Left ventricle myocardium inferior (tissue), 1 donor: ENCODE measurements at regions of chr1 and their contacts with region 1.

Region 1: DNA sequence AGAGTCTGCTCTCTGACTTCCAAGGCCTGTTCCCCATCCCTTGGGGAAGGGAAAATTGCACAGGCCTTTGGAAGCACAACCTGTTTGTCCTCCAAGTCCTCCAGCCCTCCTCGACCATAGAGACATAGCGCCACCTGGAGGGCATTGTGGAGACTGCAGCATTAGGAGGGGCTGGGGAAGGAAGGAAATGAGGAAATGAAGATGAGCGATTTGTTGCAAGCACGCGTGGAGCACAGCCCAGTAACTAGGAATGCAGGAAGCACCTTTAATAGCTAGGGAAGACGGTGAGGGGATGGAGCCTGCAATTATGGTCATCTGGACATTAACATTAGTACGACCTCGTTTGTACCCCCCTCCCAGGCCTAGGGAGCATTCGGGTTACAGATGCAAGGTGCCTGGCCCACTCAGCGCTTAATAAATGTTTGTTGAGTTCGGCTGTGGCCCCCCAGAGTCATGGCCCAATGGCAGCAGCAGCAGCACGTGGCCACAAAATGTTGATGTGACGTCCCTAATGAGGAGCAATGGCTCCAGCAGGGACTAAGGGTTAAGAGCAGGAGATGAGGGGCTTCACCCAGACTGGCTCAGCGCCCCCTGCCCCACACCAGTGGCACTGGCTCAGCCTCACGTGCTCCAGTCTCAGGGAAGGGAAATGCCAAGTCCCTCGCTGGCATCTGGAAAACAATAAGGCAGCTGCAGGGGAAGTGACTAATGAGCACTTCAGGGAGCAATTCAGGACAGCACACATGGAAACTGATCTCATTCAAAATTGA is 8.0 kb upstream of the CAMK2N1 start:
- DNase-seq: peak; percentile 86
- H3K4me3 ChIP-seq: no peak overlapping the region
- H3K27ac ChIP-seq: peak overlapping the region; percentile 73
- H3K4me1 ChIP-seq: peaks cover 26% of the 10 kb centered on the region
- H3K27me3 ChIP-seq: peaks cover 11% of the 10 kb centered on the region
- CTCF ChIP-seq: peak; percentile 96

Region 2: DNA sequence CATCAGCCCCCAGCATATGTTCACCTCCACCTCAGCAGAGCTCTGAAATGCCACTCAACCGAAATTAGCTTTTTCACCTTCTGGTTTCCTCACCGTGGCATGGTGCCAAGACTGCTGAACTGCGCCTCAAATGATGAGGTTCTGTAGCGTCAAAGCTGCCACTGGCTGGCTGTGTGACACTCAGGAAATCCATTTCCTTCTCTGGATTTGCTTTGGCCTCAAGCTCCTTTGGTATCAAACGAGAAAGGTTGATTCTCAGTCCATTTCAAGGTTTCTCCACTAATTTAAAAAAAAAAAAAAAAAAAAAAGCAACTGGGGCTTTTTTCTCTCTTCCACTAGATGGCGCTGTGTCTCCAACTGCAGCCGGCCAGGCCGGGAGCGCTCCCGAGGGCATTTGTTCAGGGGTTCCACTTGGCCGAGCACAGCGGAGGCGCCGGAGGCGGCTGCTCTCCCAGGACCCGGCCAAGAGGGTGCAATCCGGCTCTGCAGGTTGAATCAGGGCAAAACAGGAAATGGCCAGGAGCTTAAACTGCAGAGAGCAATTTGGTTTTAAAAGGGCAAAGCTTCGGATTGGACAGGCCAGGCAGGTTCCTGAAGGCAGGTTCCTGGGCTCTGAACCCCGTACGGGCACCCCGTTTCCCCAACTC is 281.2 kb before region 1 on chr1:
- intact Hi-C with region 1: loop called (anchors 5 kb)
- DNase-seq: peak; percentile 48
- H3K4me3 ChIP-seq: peak overlapping the region; percentile 33
- H3K27ac ChIP-seq: no peak overlapping the region
- H3K4me1 ChIP-seq: peaks cover 11% of the 10 kb centered on the region
- H3K27me3 ChIP-seq: peaks cover 75% of the 10 kb centered on the region
- CTCF ChIP-seq: peak; percentile 86

Region 3: DNA sequence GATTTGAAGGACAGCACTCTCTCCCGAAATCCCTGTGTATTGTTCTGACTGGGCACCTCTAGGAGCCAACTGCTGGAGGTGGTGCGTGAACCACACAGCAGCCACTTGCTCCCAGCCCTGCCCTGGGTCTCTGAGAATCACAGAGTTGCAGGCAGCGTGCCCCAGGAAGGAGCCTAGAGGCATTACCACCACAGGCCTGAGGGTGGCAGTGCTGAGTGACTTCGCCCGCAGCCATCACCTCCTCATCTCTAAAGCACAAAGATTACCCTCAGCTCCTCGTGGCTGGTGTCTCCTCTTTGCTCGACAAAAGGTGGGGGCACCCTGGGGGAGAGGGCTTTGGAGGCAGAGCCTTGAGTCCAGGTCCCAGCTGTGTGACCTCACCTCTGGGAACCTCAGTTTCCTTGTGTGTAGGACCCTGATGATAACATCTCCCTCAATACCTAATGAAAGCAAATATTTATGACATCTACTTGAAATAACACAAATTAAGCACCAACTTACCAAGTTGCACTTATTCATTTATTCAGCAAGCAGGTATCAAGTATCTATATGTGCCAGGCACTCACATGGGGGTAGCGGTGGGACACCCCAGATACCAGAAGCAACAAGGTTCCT is 117.0 kb before region 1 on chr1:
- intact Hi-C with region 1: loop called (anchors 5 kb)
- DNase-seq: peak; percentile 32
- H3K4me3 ChIP-seq: no peak overlapping the region
- H3K27ac ChIP-seq: no peak overlapping the region
- H3K4me1 ChIP-seq: no peaks in the 10 kb centered on the region
- H3K27me3 ChIP-seq: peaks cover 99% of the 10 kb centered on the region
- CTCF ChIP-seq: peak; percentile 82